ENCODE measurements at regions of chr1 and their contacts with region 1.

Region 1: GRCh38 chr1:26744075-26744959 is 43.4 kb upstream of the PIGV start:
- DNase-seq: peak; percentile 93
- H3K4me3 ChIP-seq: peak overlapping the region in 4 of 8 donors; percentile 4 to 50 (median 11)
- H3K27ac ChIP-seq: peak overlapping the region; percentile 89 to 94 (median 90)
- H3K4me1 ChIP-seq: peaks cover 49 to 100% (median 93%) of the 10 kb centered on the region in 6 donors
- H3K27me3 ChIP-seq: no peaks in the 10 kb centered on the region
- CTCF ChIP-seq: no peak
- POLR2A ChIP-seq: no peak

Region 2: GRCh38 chr1:26695356-26696118 is 48.8 kb before region 1 on chr1 and contains the start of gene ARID1A:
- intact Hi-C with region 1: loop called (anchors 10 kb)
- DNase-seq: peak; percentile 99
- H3K4me3 ChIP-seq: peak within 1 kb of the TSS; percentile 80 to 95 (median 88)
- H3K27ac ChIP-seq: peak within 1 kb of the TSS; percentile 92 to 99 (median 98)
- H3K4me1 ChIP-seq: peaks cover 39 to 76% (median 72%) of the 10 kb centered on the region in 6 donors
- H3K27me3 ChIP-seq: peaks cover 0 to 3% (median 0%) of the 10 kb centered on the region in 7 donors
- CTCF ChIP-seq: peak in 6 of 11 experiments; percentile 4 to 36 (median 16)
- POLR2A ChIP-seq: peak in 2 of 3 donors; percentile 60 to 91
- total RNA-seq, gene ARID1A: 86.0 to 121 (median 97.4) TPM

Region 3: GRCh38 chr1:26887125-26887524 is 142.8 kb after region 1 on chr1:
- intact Hi-C with region 1: no loop called
- DNase-seq: no peak
- H3K4me3 ChIP-seq: no peak overlapping the region
- H3K27ac ChIP-seq: no peak overlapping the region
- H3K4me1 ChIP-seq: peaks cover 12 to 48% (median 32%) of the 10 kb centered on the region in 6 donors
- H3K27me3 ChIP-seq: no peaks in the 10 kb centered on the region
- CTCF ChIP-seq: peak in 6 of 11 experiments; percentile 12 to 48 (median 36)
- POLR2A ChIP-seq: no peak